Posterior cingulate gyrus (tissue), 11 donors: ENCODE measurements at regions of chr12 and their contacts with region 1.

Region 1: DNA sequence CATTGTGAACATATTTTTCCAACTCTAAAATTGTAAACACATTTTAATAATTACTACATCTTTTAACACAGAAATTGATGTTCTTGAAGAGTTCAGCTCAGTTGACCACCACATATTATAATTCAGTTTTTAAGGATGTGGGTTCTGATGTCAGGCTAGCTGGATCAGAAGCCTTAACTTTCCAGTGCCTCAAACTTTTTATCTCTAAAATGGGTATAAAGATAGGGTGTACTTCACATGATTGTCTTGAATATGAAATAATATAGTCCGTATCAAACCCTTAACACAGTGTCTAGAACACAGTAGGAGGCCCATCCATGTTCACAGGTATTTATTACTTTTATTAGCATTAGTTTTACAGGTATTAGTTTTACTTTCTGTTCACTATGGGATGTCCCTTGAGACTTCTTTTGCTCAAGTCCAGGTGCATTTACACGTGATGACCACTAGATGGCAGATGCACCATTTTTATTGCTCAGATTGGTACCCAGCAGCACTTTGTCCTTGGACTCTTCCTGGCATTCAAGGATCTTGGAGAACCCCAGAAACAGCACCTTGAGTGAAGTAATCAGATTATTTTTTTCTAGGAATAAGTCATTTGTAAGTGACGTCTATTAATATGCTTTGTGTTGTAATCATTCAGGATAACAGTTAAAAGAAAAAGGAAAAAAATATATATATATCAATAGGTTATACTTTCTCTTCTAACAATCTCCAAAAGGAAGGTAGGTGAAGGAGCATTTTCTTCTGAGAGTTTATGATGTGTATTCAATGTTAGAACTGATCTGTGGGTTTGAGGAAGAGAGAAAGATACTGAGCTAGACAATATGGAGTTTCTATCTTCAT is 580.2 kb downstream of the ETNK1 start:
- DNase-seq: no peak

Region 2: GRCh38 chr12:23098517-23098916 is 106.6 kb before region 1 on chr12:
- intact Hi-C with region 1: no loop called
- DNase-seq: no peak

Region 3: GRCh38 chr12:23169012-23169695 is 36.0 kb before region 1 on chr12:
- intact Hi-C with region 1: no loop called
- DNase-seq: no peak

Region 4: GRCh38 chr12:23949348-23950209 is 744.4 kb after region 1 on chr12 and contains the start of gene SOX5:
- intact Hi-C with region 1: loop called (anchors 10 kb)
- DNase-seq: peak in 7 of 10 donors; percentile 15 to 91 (median 37)

Region 5: DNA sequence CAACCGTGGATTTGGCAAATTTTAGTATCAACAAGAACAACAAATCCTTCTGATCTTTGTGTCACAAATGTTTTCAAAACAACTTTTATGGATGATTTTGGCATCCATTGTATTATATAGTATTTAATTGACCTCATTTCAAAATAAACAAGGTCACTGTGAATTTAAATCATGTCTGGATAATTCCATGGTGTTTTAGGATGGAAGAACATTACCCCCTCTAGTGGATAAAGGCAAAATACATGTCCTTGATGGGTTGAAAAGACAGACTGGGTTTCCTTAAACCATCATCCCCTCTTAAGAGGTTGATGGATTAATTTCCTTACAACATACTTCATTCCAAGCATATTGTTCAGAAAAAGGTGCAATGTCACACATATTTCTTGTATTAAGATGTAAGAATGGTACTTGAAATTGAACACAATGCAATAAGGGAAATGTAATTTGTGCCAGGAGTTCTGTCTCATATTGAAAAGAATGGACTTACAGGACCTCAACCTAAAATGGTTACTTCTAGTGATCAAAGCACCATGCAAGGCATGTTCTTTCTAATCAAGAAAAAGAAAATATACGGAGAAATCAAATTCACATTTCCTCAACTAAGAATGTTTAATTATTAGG is 1391.7 kb after region 1 on chr12:
- intact Hi-C with region 1: loop called (anchors 10 kb)
- DNase-seq: no peak

Region 6: GRCh38 chr12:24778486-24779304 is 1573.5 kb after region 1 on chr12:
- intact Hi-C with region 1: loop called (anchors 5 kb)
- DNase-seq: no peak

Region 7: GRCh38 chr12:24838531-24838950 is 1633.4 kb after region 1 on chr12:
- intact Hi-C with region 1: loop called (anchors 10 kb)
- DNase-seq: no peak